Activated CD4-positive, alpha-beta T cell treated with anti-CD3 and anti-CD28 coated beads for 36 hours (primary cell): ENCODE measurements at regions of chr16 and their contacts with region 1.

Region 1: DNA sequence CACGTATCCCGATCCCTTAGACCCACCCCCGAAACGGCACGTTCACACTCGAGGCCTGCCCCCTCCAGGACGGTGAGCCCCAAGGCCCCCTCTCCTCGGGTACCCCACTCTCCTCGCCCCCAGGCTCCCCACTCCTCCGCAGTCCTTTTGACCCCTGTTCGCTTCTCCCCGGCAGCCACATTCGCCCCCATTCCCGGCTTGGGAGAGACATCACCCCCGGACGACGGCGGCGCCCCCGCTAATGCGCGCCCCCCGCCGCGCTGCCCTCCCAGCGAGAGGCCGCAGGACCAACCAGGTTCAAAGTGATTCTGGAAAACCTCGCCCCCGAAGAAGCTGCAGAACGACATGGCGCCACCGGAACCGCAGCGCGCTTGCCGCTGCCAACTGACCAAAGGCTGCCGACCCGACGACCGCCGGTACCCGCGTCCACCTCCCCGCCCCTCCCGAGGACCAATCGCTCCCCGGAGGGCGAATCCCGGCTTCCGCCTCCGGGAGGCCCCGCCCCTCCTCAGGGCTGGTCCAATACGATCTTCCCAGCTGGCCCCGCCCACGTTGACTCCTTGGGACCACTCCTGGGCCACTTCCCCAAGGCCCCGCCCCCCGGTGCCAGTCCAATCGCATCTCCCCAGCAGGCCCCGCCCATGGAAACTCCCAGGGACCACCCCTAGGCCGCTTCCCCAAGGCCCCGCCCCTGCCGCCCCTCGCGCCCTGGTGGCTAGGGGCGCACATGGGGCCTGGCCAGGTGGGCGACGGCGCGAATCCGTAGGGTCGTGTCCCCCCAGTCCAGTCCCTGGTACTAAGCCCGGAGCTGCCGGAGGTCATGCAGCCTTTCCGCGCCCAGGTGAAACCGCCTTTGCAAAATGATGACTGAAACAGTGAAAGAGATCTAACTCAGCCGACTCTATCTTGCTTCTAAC is at the start of gene MSRB1:
- DNase-seq: peak; percentile 100
- ATAC-seq: peak; percentile 97
- H3K4me3 Mint-ChIP-seq: peak within 1 kb of the TSS; percentile 80
- H3K27ac Mint-ChIP-seq: peak within 1 kb of the TSS; percentile 82
- H3K4me1 Mint-ChIP-seq: peaks cover 26% of the 10 kb centered on the region
- H3K27me3 Mint-ChIP-seq: no peaks in the 10 kb centered on the region
- total RNA-seq, gene MSRB1: 17.3 to 21.8 TPM

Region 2: GRCh38 chr16:1492923-1493745 is 449.9 kb before region 1 on chr16 and contains the start of gene TELO2:
- CTCF ChIA-PET with region 1: no interaction called
- POLR2A ChIA-PET with region 1: no interaction called
- intact Hi-C with region 1: loop called in 1 of 2 experiments (anchors 1 kb)
- DNase-seq: peak; percentile 94
- ATAC-seq: peak; percentile 89
- H3K4me3 Mint-ChIP-seq: peak within 1 kb of the TSS; percentile 92
- H3K27ac Mint-ChIP-seq: peak within 1 kb of the TSS; percentile 97
- H3K4me1 Mint-ChIP-seq: peaks cover 15% of the 10 kb centered on the region
- H3K27me3 Mint-ChIP-seq: no peaks in the 10 kb centered on the region
- total RNA-seq, gene TELO2: 48.1 to 60.0 TPM

Region 3: GRCh38 chr16:1772736-1773584 is 170.1 kb before region 1 on chr16 and contains the starts of genes EME2 and MRPS34:
- CTCF ChIA-PET with region 1: no interaction called
- POLR2A ChIA-PET with region 1: no interaction called
- intact Hi-C with region 1: loop called in 1 of 2 experiments (anchors 1 kb)
- DNase-seq: peak; percentile 90
- ATAC-seq: peak; percentile 53
- H3K4me3 Mint-ChIP-seq: peak within 1 kb of the TSS; percentile 94
- H3K27ac Mint-ChIP-seq: peak within 1 kb of the TSS; percentile 99
- H3K4me1 Mint-ChIP-seq: peaks cover 9% of the 10 kb centered on the region
- H3K27me3 Mint-ChIP-seq: no peaks in the 10 kb centered on the region
- total RNA-seq, gene EME2: 13.1 to 18.4 TPM
- total RNA-seq, gene MRPS34: 146 to 175 TPM

Region 4: DNA sequence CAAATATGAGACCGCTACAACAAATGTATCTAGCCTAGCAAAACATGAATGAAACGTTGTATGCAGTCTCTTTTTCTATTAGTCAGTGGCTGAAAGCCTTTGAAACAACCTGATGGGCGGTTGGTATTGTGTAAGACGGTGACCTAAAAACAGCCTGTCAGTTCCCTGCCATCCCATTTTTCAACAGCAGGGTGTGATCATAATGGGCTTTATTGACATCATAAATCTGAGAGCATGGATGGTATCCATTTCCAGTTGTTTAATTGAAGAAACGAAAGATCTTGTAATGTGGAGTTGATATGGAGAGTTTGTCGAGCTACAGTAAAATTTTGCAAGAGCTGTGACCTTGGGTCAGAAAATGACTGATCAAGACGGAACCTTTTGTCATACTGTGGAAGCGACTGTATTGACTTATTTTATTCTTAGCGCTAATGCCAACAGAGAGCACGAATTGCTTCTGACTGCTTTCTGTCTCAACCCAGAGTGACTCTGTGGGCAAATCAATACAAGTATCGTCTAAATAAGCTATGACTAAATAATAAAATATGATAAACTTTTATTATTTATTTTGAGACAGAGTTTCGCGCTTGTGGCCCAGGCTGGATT is 58.8 kb before region 1 on chr16:
- CTCF ChIA-PET with region 1: no interaction called
- POLR2A ChIA-PET with region 1: no interaction called
- intact Hi-C with region 1: no loop called
- DNase-seq: peak; percentile 27
- ATAC-seq: peak; percentile 44
- H3K4me3 Mint-ChIP-seq: no peak overlapping the region
- H3K27ac Mint-ChIP-seq: no peak overlapping the region
- H3K4me1 Mint-ChIP-seq: no peaks in the 10 kb centered on the region
- H3K27me3 Mint-ChIP-seq: peaks cover 6% of the 10 kb centered on the region

Region 5: DNA sequence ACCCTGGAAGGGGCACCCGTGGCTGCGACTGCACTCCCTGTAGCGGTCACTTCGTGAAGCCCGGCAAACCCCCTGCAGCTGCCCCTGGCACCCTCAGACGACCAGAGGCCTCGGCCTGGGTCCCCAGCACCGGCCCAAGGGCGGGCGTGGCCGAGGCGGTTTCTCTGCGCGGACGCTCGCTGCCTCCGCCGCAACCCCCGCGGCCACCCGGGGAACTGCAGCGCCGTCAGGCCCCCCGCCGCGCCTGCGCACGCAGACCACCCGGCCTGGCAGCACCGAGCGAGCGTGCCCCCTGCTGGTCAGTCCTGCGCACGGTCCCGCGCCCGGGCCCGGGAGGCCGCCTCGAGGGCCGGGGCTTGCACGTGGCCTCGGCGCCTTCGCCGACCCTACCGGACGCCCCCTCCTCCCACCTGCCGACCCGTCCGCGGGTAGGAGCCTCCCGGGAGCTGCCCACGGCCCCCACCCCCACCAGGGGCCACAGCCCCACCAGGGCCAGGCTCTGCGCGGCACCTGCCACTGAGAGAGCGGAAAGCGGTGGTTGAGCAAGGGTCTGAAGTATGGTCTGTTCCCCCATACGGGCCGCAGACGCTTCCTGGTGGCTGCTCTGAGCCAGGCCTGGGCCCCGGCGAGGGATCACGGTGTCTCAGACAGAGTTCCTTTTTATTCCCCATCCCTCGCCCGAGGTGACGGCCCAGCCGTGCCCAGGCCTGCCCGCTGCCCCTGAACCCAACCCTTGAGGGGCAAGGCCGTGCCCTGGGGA is 13.3 kb before region 1 on chr16:
- CTCF ChIA-PET with region 1: interaction called, 16 read pairs
- POLR2A ChIA-PET with region 1: no interaction called
- intact Hi-C with region 1: loop called (anchors 1 kb)
- DNase-seq: peak; percentile 96
- ATAC-seq: peak; percentile 98
- H3K4me3 Mint-ChIP-seq: peak overlapping the region; percentile 47
- H3K27ac Mint-ChIP-seq: no peak overlapping the region
- H3K4me1 Mint-ChIP-seq: peaks cover 2% of the 10 kb centered on the region
- H3K27me3 Mint-ChIP-seq: peaks cover under 1% of the 10 kb centered on the region

Region 6: DNA sequence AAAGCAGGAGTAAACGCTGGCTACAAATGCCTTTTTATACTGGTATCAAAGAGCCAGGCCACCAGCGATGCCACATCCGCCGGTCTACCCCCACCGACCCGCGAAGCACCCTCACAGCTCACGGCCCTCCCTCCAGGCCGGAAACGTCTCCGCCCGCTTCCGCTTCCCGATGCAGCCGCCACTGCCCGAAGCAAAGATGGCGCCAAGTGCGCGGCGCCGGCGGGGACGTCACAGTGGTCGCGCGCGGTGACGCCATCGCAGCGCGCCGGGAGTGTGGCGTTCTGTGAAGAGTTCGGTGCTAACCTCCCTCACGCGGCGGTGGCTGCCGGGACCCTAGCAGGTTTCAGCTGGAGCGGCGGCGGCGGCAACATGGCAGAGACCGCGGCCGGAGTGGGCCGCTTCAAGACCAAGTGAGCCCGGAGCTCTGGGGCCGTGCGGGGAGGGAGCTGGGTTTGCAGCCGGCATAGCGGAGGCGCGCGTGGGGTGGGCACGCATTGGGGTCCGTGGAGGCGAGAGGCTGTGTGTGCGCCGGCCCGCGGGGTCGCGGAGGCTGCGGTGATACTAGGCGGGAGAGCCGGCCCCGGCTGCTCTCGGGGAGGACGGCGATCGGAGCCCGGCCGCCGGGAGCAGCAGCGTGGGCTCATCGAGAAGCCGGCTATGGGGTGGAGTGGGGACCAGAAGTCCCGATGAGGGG is 28.9 kb after region 1 on chr16 and contains the start of gene TBL3:
- CTCF ChIA-PET with region 1: interaction called, 4 read pairs
- POLR2A ChIA-PET with region 1: interaction called, 6 read pairs
- intact Hi-C with region 1: loop called (anchors 1 kb)
- DNase-seq: peak; percentile 98
- ATAC-seq: peak; percentile 97
- H3K4me3 Mint-ChIP-seq: peak within 1 kb of the TSS; percentile 99
- H3K27ac Mint-ChIP-seq: peak within 1 kb of the TSS; percentile 99
- H3K4me1 Mint-ChIP-seq: peaks cover 16% of the 10 kb centered on the region
- H3K27me3 Mint-ChIP-seq: no peaks in the 10 kb centered on the region
- total RNA-seq, gene TBL3: 47.4 to 48.6 TPM

Region 7: GRCh38 chr16:2047330-2048115 is 104.5 kb after region 1 on chr16 and contains the starts of genes NTHL1 and TSC2:
- CTCF ChIA-PET with region 1: no interaction called
- POLR2A ChIA-PET with region 1: no interaction called
- intact Hi-C with region 1: loop called in 1 of 2 experiments (anchors 1 kb)
- DNase-seq: peak; percentile 97
- ATAC-seq: peak; percentile 97
- H3K4me3 Mint-ChIP-seq: peak within 1 kb of the TSS; percentile 89
- H3K27ac Mint-ChIP-seq: peak within 1 kb of the TSS; percentile 85
- H3K4me1 Mint-ChIP-seq: peaks cover 18% of the 10 kb centered on the region
- H3K27me3 Mint-ChIP-seq: no peaks in the 10 kb centered on the region
- total RNA-seq, gene NTHL1: 22.6 to 26.1 TPM
- total RNA-seq, gene TSC2: 49.6 to 72.9 TPM